ENCODE measurements at regions of chr1 and their contacts with region 1.

Region 1: GRCh38 chr1:25642574-25643108 is 26.1 kb downstream of the MAN1C1 start:
- DNase-seq: peak; percentile 53 to 90 (median 74)
- ATAC-seq: peak; percentile 84
- H3K4me3 ChIP-seq: peak overlapping the region; percentile 7 to 14
- H3K4me3 Mint-ChIP-seq: peak overlapping the region; percentile 74
- H3K27ac ChIP-seq: peak overlapping the region; percentile 51 to 57
- H3K27ac Mint-ChIP-seq: peak overlapping the region; percentile 95
- H3K4me1 ChIP-seq: peaks cover 57% of the 10 kb centered on the region
- H3K4me1 Mint-ChIP-seq: peaks cover 77% of the 10 kb centered on the region
- H3K27me3 ChIP-seq: no peaks in the 10 kb centered on the region
- H3K27me3 Mint-ChIP-seq: no peaks in the 10 kb centered on the region
- CTCF ChIP-seq: no peak

Region 2: GRCh38 chr1:25624156-25624555 is 18.5 kb before region 1 on chr1:
- CTCF ChIA-PET with region 1: interaction called, 41 read pairs
- POLR2A ChIA-PET with region 1: interaction called, 17 read pairs
- intact Hi-C with region 1: loop called (anchors 1 kb)
- DNase-seq: peak in 2 of 9 experiments; percentile 33 to 61
- ATAC-seq: no peak
- H3K4me3 ChIP-seq: no peak overlapping the region
- H3K4me3 Mint-ChIP-seq: peak overlapping the region; percentile 8
- H3K27ac ChIP-seq: peak overlapping the region in 1 of 2 experiments; percentile 9
- H3K27ac Mint-ChIP-seq: no peak overlapping the region
- H3K4me1 ChIP-seq: peaks cover 67% of the 10 kb centered on the region
- H3K4me1 Mint-ChIP-seq: peaks cover 87% of the 10 kb centered on the region
- H3K27me3 ChIP-seq: no peaks in the 10 kb centered on the region
- H3K27me3 Mint-ChIP-seq: no peaks in the 10 kb centered on the region
- CTCF ChIP-seq: no peak

Region 3: GRCh38 chr1:25631750-25632485 is 10.7 kb before region 1 on chr1:
- CTCF ChIA-PET with region 1: interaction called, 4 read pairs
- POLR2A ChIA-PET with region 1: interaction called, 9 read pairs
- intact Hi-C with region 1: loop called (anchors 1 kb)
- DNase-seq: peak in 2 of 9 experiments; percentile 30 to 47
- ATAC-seq: peak; percentile 45
- H3K4me3 ChIP-seq: peak overlapping the region; percentile 28 to 31
- H3K4me3 Mint-ChIP-seq: peak overlapping the region; percentile 86
- H3K27ac ChIP-seq: peak overlapping the region; percentile 44 to 48
- H3K27ac Mint-ChIP-seq: peak overlapping the region; percentile 95
- H3K4me1 ChIP-seq: peaks cover 49% of the 10 kb centered on the region
- H3K4me1 Mint-ChIP-seq: peaks cover 66% of the 10 kb centered on the region
- H3K27me3 ChIP-seq: no peaks in the 10 kb centered on the region
- H3K27me3 Mint-ChIP-seq: no peaks in the 10 kb centered on the region
- CTCF ChIP-seq: no peak

Region 4: DNA sequence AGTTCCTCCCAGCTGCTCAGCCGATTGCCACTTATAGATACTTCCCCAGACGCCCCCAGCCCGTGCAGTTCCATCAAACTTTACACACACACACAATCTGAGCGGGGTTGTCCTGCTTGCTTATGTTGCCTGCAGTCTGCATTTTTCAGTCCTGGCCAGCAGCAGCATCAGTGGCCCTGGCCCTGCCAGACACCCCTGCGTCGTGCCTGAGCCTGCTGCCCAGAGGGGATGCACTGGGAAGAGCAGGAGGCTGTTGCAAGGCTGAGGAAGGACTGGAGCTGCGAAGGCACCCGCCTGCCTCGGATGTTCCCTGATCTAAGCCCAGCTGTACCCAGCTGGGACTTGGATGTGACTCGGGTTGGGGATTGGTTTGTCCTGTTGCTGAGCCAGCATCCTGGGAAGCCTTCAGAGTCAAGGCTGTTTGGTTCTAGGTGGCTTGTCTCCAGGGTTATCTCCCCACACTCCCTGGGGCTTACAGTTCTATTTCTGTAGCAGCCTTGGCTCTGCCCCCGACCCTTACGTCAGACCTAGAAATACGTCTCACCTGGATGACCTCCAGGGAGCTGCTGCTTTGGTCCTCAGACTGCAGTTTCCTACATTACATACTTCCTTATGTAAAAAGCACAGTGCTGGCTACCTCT is 16.3 kb after region 1 on chr1:
- CTCF ChIA-PET with region 1: no interaction called
- POLR2A ChIA-PET with region 1: no interaction called
- intact Hi-C with region 1: no loop called
- DNase-seq: peak in 2 of 9 experiments; percentile 2 to 44
- ATAC-seq: no peak
- H3K4me3 ChIP-seq: no peak overlapping the region
- H3K4me3 Mint-ChIP-seq: no peak overlapping the region
- H3K27ac ChIP-seq: no peak overlapping the region
- H3K27ac Mint-ChIP-seq: peak overlapping the region; percentile 43
- H3K4me1 ChIP-seq: peaks cover 23% of the 10 kb centered on the region
- H3K4me1 Mint-ChIP-seq: peaks cover 59% of the 10 kb centered on the region
- H3K27me3 ChIP-seq: no peaks in the 10 kb centered on the region
- H3K27me3 Mint-ChIP-seq: no peaks in the 10 kb centered on the region
- CTCF ChIP-seq: no peak

Region 5: GRCh38 chr1:25675729-25676476 is 33.3 kb after region 1 on chr1:
- CTCF ChIA-PET with region 1: no interaction called
- POLR2A ChIA-PET with region 1: interaction called, 9 read pairs
- intact Hi-C with region 1: loop called (anchors 2 to 5 kb)
- DNase-seq: peak; percentile 36 to 90 (median 74)
- ATAC-seq: peak; percentile 80
- H3K4me3 ChIP-seq: peak overlapping the region; percentile 14 to 41
- H3K4me3 Mint-ChIP-seq: peak overlapping the region; percentile 80
- H3K27ac ChIP-seq: peak overlapping the region; percentile 38 to 45
- H3K27ac Mint-ChIP-seq: peak overlapping the region; percentile 94
- H3K4me1 ChIP-seq: peaks cover 71% of the 10 kb centered on the region
- H3K4me1 Mint-ChIP-seq: peaks cover 88% of the 10 kb centered on the region
- H3K27me3 ChIP-seq: no peaks in the 10 kb centered on the region
- H3K27me3 Mint-ChIP-seq: no peaks in the 10 kb centered on the region
- CTCF ChIP-seq: no peak